IMR-90 (cell line): ENCODE measurements at regions of chr20 and their contacts with region 1.

Region 1: DNA sequence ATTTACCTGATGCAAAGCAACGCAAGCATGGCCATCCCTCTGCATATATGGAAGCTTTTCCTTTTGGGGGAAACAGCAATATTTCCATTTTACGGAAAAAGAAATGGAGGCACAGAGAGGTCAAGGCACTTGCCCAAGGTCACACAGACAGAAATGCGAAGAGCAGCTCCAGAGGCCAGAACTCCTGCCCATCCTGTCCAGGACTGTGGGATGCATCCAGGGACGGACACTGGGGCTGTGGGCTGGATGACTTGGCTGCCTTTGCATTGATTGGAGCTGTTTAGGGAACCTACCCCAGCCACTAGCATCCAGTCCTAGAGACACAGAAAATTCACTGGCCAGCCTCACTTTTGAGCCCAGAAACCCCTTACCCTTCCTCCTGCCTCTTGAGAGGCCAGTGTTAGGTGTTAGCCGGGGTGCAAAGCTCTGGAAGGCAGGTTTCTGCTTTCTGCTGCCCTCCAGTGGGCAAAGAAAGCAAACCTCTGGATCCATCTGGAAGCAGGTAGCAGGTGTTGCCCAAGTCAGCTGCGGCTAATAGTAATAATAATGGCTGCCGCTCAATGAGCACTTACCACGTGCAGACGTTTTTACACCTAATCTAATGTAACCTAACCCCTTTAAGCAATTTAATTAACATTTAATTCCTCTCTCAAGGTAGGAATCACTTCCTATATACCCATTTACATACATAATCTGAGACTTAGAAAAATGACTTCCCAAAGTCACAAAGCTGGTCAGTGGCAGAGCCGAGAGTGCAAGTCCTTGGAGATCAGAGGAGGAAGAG is 31.7 kb upstream of the CCN5 start:
- DNase-seq: peak; percentile 42
- ATAC-seq: peak; percentile 69
- H3K4me3 ChIP-seq: no peak overlapping the region
- H3K27ac ChIP-seq: no peak overlapping the region
- H3K4me1 ChIP-seq: peaks cover under 1% of the 10 kb centered on the region; the same call in 1 of the 2 replicates
- H3K27me3 ChIP-seq: peaks cover 9% of the 10 kb centered on the region
- CTCF ChIP-seq: peak; percentile 65
- POLR2A ChIP-seq: no peak
- RAD21 ChIP-seq: peak; percentile 64

Region 2: GRCh38 chr20:44861531-44862006 is 178.1 kb after region 1 on chr20:
- CTCF ChIA-PET with region 1: interaction called, 3 read pairs
- POLR2A ChIA-PET with region 1: no interaction called
- dilution Hi-C with region 1: no loop called
- in situ Hi-C with region 1: loop called (anchors 10 kb)
- intact Hi-C with region 1: no loop called
- DNase-seq: peak; percentile 18
- ATAC-seq: peak; percentile 53
- H3K4me3 ChIP-seq: no peak overlapping the region
- H3K27ac ChIP-seq: no peak overlapping the region
- H3K4me1 ChIP-seq: 0 out of 2 replicates have a peak, but pooled peaks cover 2% of the 10 kb centered on the region
- H3K27me3 ChIP-seq: peaks cover 9% of the 10 kb centered on the region
- CTCF ChIP-seq: no peak
- POLR2A ChIP-seq: no peak
- RAD21 ChIP-seq: no peak

Region 3: DNA sequence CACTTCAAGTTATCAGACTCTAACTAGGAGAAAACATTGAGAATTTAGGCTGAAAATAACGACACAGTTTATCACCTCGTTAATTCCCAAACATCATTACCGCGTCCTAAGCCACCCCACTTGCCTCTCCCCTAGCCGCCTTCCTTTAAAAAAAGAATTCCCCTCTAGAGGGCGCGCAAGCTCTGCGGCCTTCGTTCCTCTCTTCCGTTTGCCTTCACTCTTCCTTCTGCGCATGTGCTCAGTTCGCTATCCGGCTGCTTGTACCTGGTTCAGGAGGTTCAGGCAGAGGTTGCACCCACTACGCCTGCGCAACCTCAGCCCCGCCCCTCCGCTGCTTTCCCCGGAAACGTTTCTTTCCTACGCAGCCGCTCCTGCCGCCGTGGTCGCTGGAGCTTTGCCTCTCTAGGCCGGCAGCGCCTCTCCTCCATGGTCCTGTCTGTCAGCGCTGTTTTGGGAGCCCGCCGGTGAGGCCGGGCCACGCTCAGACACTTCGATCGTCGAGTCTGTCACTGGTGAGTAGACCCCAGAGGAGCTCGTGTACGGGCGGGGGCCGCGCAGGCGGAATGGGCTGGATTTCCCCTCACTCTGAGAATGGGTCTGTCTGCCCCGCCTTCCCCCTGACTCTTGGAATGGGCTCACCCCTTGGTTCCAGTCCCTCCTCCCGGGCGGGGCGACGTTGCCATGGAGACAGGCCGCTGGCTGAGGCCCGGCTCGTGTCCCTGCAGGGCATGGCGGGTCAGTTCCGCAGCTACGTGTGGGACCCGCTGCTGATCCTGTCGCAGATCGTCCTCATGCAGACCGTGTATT is 679.6 kb after region 1 on chr20 and contains the start of gene SYS1:
- CTCF ChIA-PET with region 1: no interaction called
- POLR2A ChIA-PET with region 1: no interaction called
- dilution Hi-C with region 1: no loop called
- in situ Hi-C with region 1: no loop called
- intact Hi-C with region 1: no loop called
- DNase-seq: peak; percentile 98
- ATAC-seq: peak; percentile 91
- H3K4me3 ChIP-seq: peak within 1 kb of the TSS; percentile 65
- H3K27ac ChIP-seq: peak within 1 kb of the TSS; percentile 94
- H3K4me1 ChIP-seq: peaks cover 17% of the 10 kb centered on the region
- H3K27me3 ChIP-seq: no peaks in the 10 kb centered on the region
- CTCF ChIP-seq: peak; percentile 98
- POLR2A ChIP-seq: peak; percentile 97
- RAD21 ChIP-seq: peak; percentile 84
- total RNA-seq, gene SYS1: 12.9 and 16.7 TPM in 2 replicates